ENCODE measurements at regions of chr13 and their contacts with region 1.

Region 1: GRCh38 chr13:23175920-23176319 is 4.9 kb upstream of the SGCG start:
- DNase-seq: no peak
- H3K4me3 Mint-ChIP-seq: no peak overlapping the region
- H3K27ac Mint-ChIP-seq: no peak overlapping the region
- H3K4me1 Mint-ChIP-seq: no peaks in the 10 kb centered on the region
- H3K27me3 Mint-ChIP-seq: peaks cover 12% of the 10 kb centered on the region
- CTCF ChIP-seq: no peak

Region 2: GRCh38 chr13:23319883-23320224 is 143.9 kb after region 1 on chr13:
- CTCF ChIA-PET with region 1: no interaction called
- intact Hi-C with region 1: loop called (anchors 5 kb)
- DNase-seq: no peak
- H3K4me3 Mint-ChIP-seq: no peak overlapping the region
- H3K27ac Mint-ChIP-seq: no peak overlapping the region
- H3K4me1 Mint-ChIP-seq: no peaks in the 10 kb centered on the region
- H3K27me3 Mint-ChIP-seq: no peaks in the 10 kb centered on the region
- CTCF ChIP-seq: no peak

Measured in Calu3 (cell line).